Heart left ventricle (tissue), 16 donors: ENCODE measurements at regions of chr10 and their contacts with region 1.

Region 1: GRCh38 chr10:44386546-44387052 is 1.7 kb upstream of the CXCL12 start:
- DNase-seq: peak; percentile 65 to 86 (median 75)
- ATAC-seq: peak; percentile 52 to 86 (median 83)
- H3K4me3 ChIP-seq: peak overlapping the region in 4 of 12 donors; percentile 14 to 87 (median 30)
- H3K27ac ChIP-seq: peak overlapping the region in 3 of 12 donors; percentile 79 to 89 (median 82)
- H3K4me1 ChIP-seq: peaks cover 0 to 49% (median 20%) of the 10 kb centered on the region in 12 donors
- H3K27me3 ChIP-seq: peaks cover 0 to 26% (median 0%) of the 10 kb centered on the region in 9 donors
- CTCF ChIP-seq: peak; percentile 82 to 95 (median 92)
- POLR2A ChIP-seq: no peak

Region 2: GRCh38 chr10:43671656-43672531 is 714.7 kb before region 1 on chr10:
- intact Hi-C with region 1: loop called (anchors 1 to 5 kb)
- DNase-seq: peak in 3 of 5 donors; percentile 52 to 64 (median 52)
- ATAC-seq: peak; percentile 67 to 76 (median 69)
- H3K4me3 ChIP-seq: no peak overlapping the region
- H3K27ac ChIP-seq: no peak overlapping the region
- H3K4me1 ChIP-seq: peaks cover 0 to 20% (median 8%) of the 10 kb centered on the region in 12 donors
- H3K27me3 ChIP-seq: peaks cover 0 to 17% (median 11%) of the 10 kb centered on the region in 9 donors
- CTCF ChIP-seq: peak; percentile 71 to 89 (median 80)
- POLR2A ChIP-seq: no peak

Region 3: GRCh38 chr10:43816351-43817321 is 570.0 kb before region 1 on chr10:
- intact Hi-C with region 1: loop called in 2 of 10 experiments (anchors 10 kb)
- DNase-seq: peak in 4 of 5 donors; percentile 55 to 72 (median 68)
- ATAC-seq: peak; percentile 86 to 95 (median 93)
- H3K4me3 ChIP-seq: peak overlapping the region in 1 of 12 donors; percentile 1
- H3K27ac ChIP-seq: peak overlapping the region; percentile 43 to 89 (median 73)
- H3K4me1 ChIP-seq: peaks cover under 1 to 67% (median 33%) of the 10 kb centered on the region in 12 donors
- H3K27me3 ChIP-seq: no peaks in the 10 kb centered on the region
- CTCF ChIP-seq: no peak
- POLR2A ChIP-seq: no peak

Region 4: GRCh38 chr10:43905512-43906236 is 480.9 kb before region 1 on chr10:
- intact Hi-C with region 1: loop called in 1 of 10 experiments (anchors 10 kb)
- DNase-seq: peak in 4 of 5 donors; percentile 72 to 80 (median 74)
- ATAC-seq: peak; percentile 52 to 70 (median 68)
- H3K4me3 ChIP-seq: no peak overlapping the region
- H3K27ac ChIP-seq: peak overlapping the region; percentile 47 to 79 (median 58)
- H3K4me1 ChIP-seq: peaks cover 9 to 47% (median 26%) of the 10 kb centered on the region in 12 donors
- H3K27me3 ChIP-seq: no peaks in the 10 kb centered on the region
- CTCF ChIP-seq: no peak
- POLR2A ChIP-seq: no peak

Region 5: GRCh38 chr10:44046605-44047004 is 340.0 kb before region 1 on chr10:
- intact Hi-C with region 1: loop called in 2 of 10 experiments (anchors 10 kb)
- DNase-seq: no peak
- ATAC-seq: no peak
- H3K4me3 ChIP-seq: no peak overlapping the region
- H3K27ac ChIP-seq: peak overlapping the region in 4 of 12 donors; percentile 4 to 69 (median 27)
- H3K4me1 ChIP-seq: peaks cover 0 to 33% (median 8%) of the 10 kb centered on the region in 12 donors
- H3K27me3 ChIP-seq: no peaks in the 10 kb centered on the region
- CTCF ChIP-seq: peak in 3 of 12 donors; percentile 7 to 22 (median 11)
- POLR2A ChIP-seq: no peak

Region 6: GRCh38 chr10:44195112-44196007 is 191.2 kb before region 1 on chr10:
- intact Hi-C with region 1: loop called in 1 of 10 experiments (anchors 10 kb)
- DNase-seq: peak; percentile 54 to 75 (median 66)
- ATAC-seq: peak; percentile 33 to 86 (median 74)
- H3K4me3 ChIP-seq: no peak overlapping the region
- H3K27ac ChIP-seq: peak overlapping the region in 4 of 12 donors; percentile 28 to 41 (median 34)
- H3K4me1 ChIP-seq: peaks cover 0 to 50% (median 18%) of the 10 kb centered on the region in 12 donors
- H3K27me3 ChIP-seq: no peaks in the 10 kb centered on the region
- CTCF ChIP-seq: no peak
- POLR2A ChIP-seq: no peak

Region 7: DNA sequence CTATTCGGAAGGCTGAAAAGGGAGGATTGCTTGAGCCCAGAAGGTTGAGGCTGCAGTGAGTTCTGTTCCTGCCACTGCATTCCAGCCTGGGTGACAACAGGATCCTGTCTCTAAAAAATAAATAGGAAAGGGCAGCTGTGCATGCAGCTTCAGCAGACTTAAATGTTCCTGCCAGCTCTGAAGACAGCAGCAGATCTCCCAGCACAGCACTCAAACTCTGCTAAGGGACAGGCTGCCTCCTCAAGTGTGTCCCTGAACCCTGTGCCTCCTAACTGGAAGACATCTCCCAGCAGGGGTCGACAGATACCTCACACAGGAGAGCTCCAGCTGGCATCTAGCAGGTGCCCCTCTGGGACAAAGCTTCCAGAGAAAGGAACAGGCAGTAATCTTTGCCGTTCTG is 119.6 kb before region 1 on chr10:
- intact Hi-C with region 1: no loop called
- DNase-seq: no peak
- ATAC-seq: no peak
- H3K4me3 ChIP-seq: no peak overlapping the region
- H3K27ac ChIP-seq: no peak overlapping the region
- H3K4me1 ChIP-seq: peaks cover 0 to 23% (median 9%) of the 10 kb centered on the region in 12 donors
- H3K27me3 ChIP-seq: no peaks in the 10 kb centered on the region
- CTCF ChIP-seq: no peak
- POLR2A ChIP-seq: no peak

Region 8: GRCh38 chr10:44422570-44423101 is 36.0 kb after region 1 on chr10:
- intact Hi-C with region 1: no loop called
- DNase-seq: peak in 1 of 5 donors; percentile 33
- ATAC-seq: peak in 2 of 4 donors; percentile 8 to 24
- H3K4me3 ChIP-seq: no peak overlapping the region
- H3K27ac ChIP-seq: no peak overlapping the region
- H3K4me1 ChIP-seq: no peaks in the 10 kb centered on the region
- H3K27me3 ChIP-seq: no peaks in the 10 kb centered on the region
- CTCF ChIP-seq: no peak
- POLR2A ChIP-seq: no peak

Region 9: DNA sequence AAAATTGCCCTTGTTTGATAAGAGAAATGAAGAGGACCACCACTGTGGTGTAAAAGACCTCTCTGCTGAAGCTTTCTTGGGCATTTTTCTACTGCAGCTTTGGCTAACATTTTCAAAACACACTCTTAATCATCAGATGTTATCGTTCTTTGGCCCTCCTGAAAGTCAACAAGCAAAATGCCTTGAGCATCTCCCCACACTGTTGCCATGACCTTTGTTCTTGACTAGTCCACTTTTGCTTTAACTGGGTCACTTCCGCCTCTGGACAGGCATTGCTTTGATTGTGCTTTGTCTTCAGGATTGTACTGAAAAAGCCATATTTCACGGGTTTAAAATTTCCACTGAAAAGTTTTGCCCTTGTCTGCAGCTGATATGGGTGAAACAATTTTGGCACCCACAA is 106.1 kb after region 1 on chr10:
- intact Hi-C with region 1: no loop called
- DNase-seq: no peak
- ATAC-seq: no peak
- H3K4me3 ChIP-seq: no peak overlapping the region
- H3K27ac ChIP-seq: no peak overlapping the region
- H3K4me1 ChIP-seq: no peaks in the 10 kb centered on the region
- H3K27me3 ChIP-seq: peaks cover 0 to 4% (median 0%) of the 10 kb centered on the region in 9 donors
- CTCF ChIP-seq: no peak
- POLR2A ChIP-seq: no peak

Region 10: GRCh38 chr10:44857363-44858016 is 470.9 kb after region 1 on chr10:
- intact Hi-C with region 1: loop called (anchors 2 to 5 kb)
- DNase-seq: peak; percentile 77 to 86 (median 81)
- ATAC-seq: peak; percentile 70 to 90 (median 83)
- H3K4me3 ChIP-seq: no peak overlapping the region
- H3K27ac ChIP-seq: no peak overlapping the region
- H3K4me1 ChIP-seq: peaks cover 0 to 19% (median 2%) of the 10 kb centered on the region in 12 donors
- H3K27me3 ChIP-seq: no peaks in the 10 kb centered on the region
- CTCF ChIP-seq: peak; percentile 96 to 100 (median 98)
- POLR2A ChIP-seq: no peak